Activated naive CD4-positive, alpha-beta T cell treated with anti-CD3 and anti-CD28 coated beads for 36 hours (primary cell): ENCODE measurements at regions of chr1 and their contacts with region 1.

Region 1: GRCh38 chr1:16677552-16678431 is 11.0 kb upstream of the RNU1-3 start:
- DNase-seq: peak; percentile 66
- H3K4me3 Mint-ChIP-seq: peak overlapping the region; percentile 50
- H3K27ac Mint-ChIP-seq: peak overlapping the region; percentile 72
- H3K4me1 Mint-ChIP-seq: peaks cover 25% of the 10 kb centered on the region
- H3K27me3 Mint-ChIP-seq: peaks cover 22% of the 10 kb centered on the region

Region 2: GRCh38 chr1:16727190-16728111 is 49.7 kb after region 1 on chr1:
- CTCF ChIA-PET with region 1: no interaction called
- intact Hi-C with region 1: loop called (anchors 10 kb)
- DNase-seq: peak; percentile 77
- H3K4me3 Mint-ChIP-seq: no peak overlapping the region
- H3K27ac Mint-ChIP-seq: no peak overlapping the region
- H3K4me1 Mint-ChIP-seq: no peaks in the 10 kb centered on the region
- H3K27me3 Mint-ChIP-seq: peaks cover 3% of the 10 kb centered on the region